Testis (tissue), 5 donors: ENCODE measurements at regions of chr12 and their contacts with region 1.

Region 1: DNA sequence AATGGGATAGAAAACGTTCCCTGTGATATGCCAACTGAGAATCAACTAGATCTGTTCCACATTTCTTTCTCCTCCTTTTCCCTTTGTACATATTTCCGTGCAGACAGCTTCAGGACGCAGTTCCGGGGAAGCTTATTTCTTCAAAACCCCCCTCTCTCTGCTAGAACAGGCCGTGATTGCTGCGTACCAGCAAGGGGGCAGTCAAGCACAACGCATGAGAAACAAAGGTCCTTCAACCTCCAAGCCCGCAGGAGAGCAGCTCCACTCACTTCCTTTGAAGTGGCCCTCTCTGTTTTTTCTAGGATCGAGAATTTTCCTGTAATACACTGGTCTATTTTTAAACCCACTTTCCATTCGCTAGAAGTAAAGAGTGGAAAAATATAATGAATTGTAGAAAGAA is 80.8 kb downstream of the ZNF664 start:
- DNase-seq: peak; percentile 79
- H3K4me3 ChIP-seq: no peak overlapping the region
- H3K27ac ChIP-seq: no peak overlapping the region
- H3K4me1 ChIP-seq: no peaks in the 10 kb centered on the region
- H3K27me3 ChIP-seq: no peaks in the 10 kb centered on the region
- CTCF ChIP-seq: peak; percentile 58 to 68 (median 64)
- POLR2A ChIP-seq: no peak

Region 2: GRCh38 chr12:123907726-123908470 is 146.0 kb before region 1 on chr12:
- intact Hi-C with region 1: no loop called
- DNase-seq: no peak
- H3K4me3 ChIP-seq: no peak overlapping the region
- H3K27ac ChIP-seq: no peak overlapping the region
- H3K4me1 ChIP-seq: no peaks in the 10 kb centered on the region
- H3K27me3 ChIP-seq: no peaks in the 10 kb centered on the region
- CTCF ChIP-seq: no peak
- POLR2A ChIP-seq: no peak

Region 3: GRCh38 chr12:124233041-124233796 is 179.4 kb after region 1 on chr12:
- intact Hi-C with region 1: no loop called
- DNase-seq: no peak
- H3K4me3 ChIP-seq: no peak overlapping the region
- H3K27ac ChIP-seq: no peak overlapping the region
- H3K4me1 ChIP-seq: no peaks in the 10 kb centered on the region
- H3K27me3 ChIP-seq: no peaks in the 10 kb centered on the region
- CTCF ChIP-seq: no peak
- POLR2A ChIP-seq: no peak

Region 4: GRCh38 chr12:124321040-124321481 is 267.2 kb after region 1 on chr12:
- intact Hi-C with region 1: loop called (anchors 10 kb)
- DNase-seq: peak; percentile 73
- H3K4me3 ChIP-seq: no peak overlapping the region
- H3K27ac ChIP-seq: peak overlapping the region in 1 of 2 donors; percentile 0
- H3K4me1 ChIP-seq: no peaks in the 10 kb centered on the region
- H3K27me3 ChIP-seq: no peaks in the 10 kb centered on the region
- CTCF ChIP-seq: peak; percentile 87 to 89 (median 88)
- POLR2A ChIP-seq: no peak

Region 5: GRCh38 chr12:124767066-124767821 is 713.4 kb after region 1 on chr12:
- intact Hi-C with region 1: loop called (anchors 5 kb)
- DNase-seq: peak; percentile 87
- H3K4me3 ChIP-seq: no peak overlapping the region
- H3K27ac ChIP-seq: no peak overlapping the region
- H3K4me1 ChIP-seq: peaks cover 29% of the 10 kb centered on the region
- H3K27me3 ChIP-seq: no peaks in the 10 kb centered on the region
- CTCF ChIP-seq: peak; percentile 99 to 100 (median 100)
- POLR2A ChIP-seq: no peak